HepG2 (cell line): ENCODE measurements at regions of chr20 and their contacts with region 1.

Region 1: DNA sequence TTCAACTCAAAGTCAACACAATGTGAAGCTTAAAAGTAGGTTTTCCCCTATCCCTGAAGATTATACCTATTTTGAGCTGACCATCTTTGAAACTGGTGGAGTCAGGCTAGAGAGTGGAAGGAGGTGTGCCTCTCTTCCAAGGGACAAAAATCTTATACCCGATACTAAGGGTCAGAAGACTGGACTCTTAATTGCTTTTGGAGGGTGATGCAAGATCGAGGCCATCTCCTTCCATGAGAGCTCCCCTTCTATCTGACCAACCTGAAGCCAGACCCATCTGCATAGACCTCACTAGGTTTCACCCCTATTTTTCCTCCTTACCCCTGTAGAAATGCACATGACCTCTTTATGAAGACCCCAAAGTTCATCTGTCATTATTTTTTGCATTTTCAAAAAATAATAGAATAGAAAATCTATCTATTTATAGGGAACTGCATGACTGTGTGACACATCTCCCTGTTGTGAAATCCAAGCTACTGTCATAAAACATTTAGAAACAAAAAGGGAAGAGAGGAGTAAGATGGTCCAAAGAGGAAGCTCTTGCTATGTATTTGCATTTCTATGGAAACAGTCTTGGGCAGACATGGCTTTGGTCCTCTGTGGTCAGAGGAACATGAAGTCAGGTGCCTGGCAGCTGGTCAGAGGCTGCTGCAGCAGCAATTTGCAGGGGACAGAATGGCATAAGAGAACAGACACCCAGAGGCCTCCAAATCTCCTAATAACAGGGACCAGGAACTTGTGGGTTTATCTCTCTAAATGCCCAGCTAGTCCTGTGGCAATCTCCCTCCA is 349.2 kb downstream of the MAFB start:
- DNase-seq: no peak
- ATAC-seq: no peak
- H3K4me3 ChIP-seq: no peak overlapping the region
- H3K27ac ChIP-seq: no peak overlapping the region
- H3K4me1 ChIP-seq: no peaks in the 10 kb centered on the region
- H3K27me3 ChIP-seq: no peaks in the 10 kb centered on the region
- CTCF ChIP-seq: no peak
- EP300 ChIP-seq: no peak
- POLR2A ChIP-seq: no peak
- RAD21 ChIP-seq: no peak

Region 2: GRCh38 chr20:40368876-40369275 is 29.0 kb after region 1 on chr20:
- CTCF ChIA-PET with region 1: no interaction called
- POLR2A ChIA-PET with region 1: no interaction called
- in situ Hi-C with region 1: no loop called
- intact Hi-C with region 1: loop called (anchors 2 kb)
- DNase-seq: no peak
- ATAC-seq: no peak
- H3K4me3 ChIP-seq: no peak overlapping the region
- H3K27ac ChIP-seq: no peak overlapping the region
- H3K4me1 ChIP-seq: no peaks in the 10 kb centered on the region
- H3K27me3 ChIP-seq: no peaks in the 10 kb centered on the region
- CTCF ChIP-seq: no peak
- EP300 ChIP-seq: no peak
- POLR2A ChIP-seq: no peak
- RAD21 ChIP-seq: no peak